ENCODE measurements at regions of chr1 and their contacts with region 1.

Region 1: GRCh38 chr1:117541003-117541402 is 64.8 kb upstream of the TENT5C start:
- DNase-seq: no peak
- ATAC-seq: no peak
- H3K4me3 ChIP-seq: no peak overlapping the region
- H3K4me3 Mint-ChIP-seq: no peak overlapping the region
- H3K27ac ChIP-seq: no peak overlapping the region
- H3K27ac Mint-ChIP-seq: no peak overlapping the region
- H3K4me1 ChIP-seq: peaks cover 9% of the 10 kb centered on the region
- H3K4me1 Mint-ChIP-seq: no peaks in the 10 kb centered on the region
- H3K27me3 ChIP-seq: no peaks in the 10 kb centered on the region
- H3K27me3 Mint-ChIP-seq: no peaks in the 10 kb centered on the region
- CTCF ChIP-seq: no peak

Region 2: GRCh38 chr1:117590271-117590925 is 49.4 kb after region 1 on chr1:
- CTCF ChIA-PET with region 1: no interaction called
- POLR2A ChIA-PET with region 1: no interaction called
- intact Hi-C with region 1: loop called in 1 of 2 experiments (anchors 5 kb)
- DNase-seq: no peak
- ATAC-seq: no peak
- H3K4me3 ChIP-seq: no peak overlapping the region
- H3K4me3 Mint-ChIP-seq: no peak overlapping the region
- H3K27ac ChIP-seq: no peak overlapping the region
- H3K27ac Mint-ChIP-seq: no peak overlapping the region
- H3K4me1 ChIP-seq: no peaks in the 10 kb centered on the region
- H3K4me1 Mint-ChIP-seq: no peaks in the 10 kb centered on the region
- H3K27me3 ChIP-seq: no peaks in the 10 kb centered on the region
- H3K27me3 Mint-ChIP-seq: no peaks in the 10 kb centered on the region
- CTCF ChIP-seq: no peak

Region 3: GRCh38 chr1:117942293-117942692 is 401.3 kb after region 1 on chr1:
- CTCF ChIA-PET with region 1: no interaction called
- POLR2A ChIA-PET with region 1: no interaction called
- intact Hi-C with region 1: no loop called
- DNase-seq: no peak
- ATAC-seq: no peak
- H3K4me3 ChIP-seq: no peak overlapping the region
- H3K4me3 Mint-ChIP-seq: no peak overlapping the region
- H3K27ac ChIP-seq: no peak overlapping the region
- H3K27ac Mint-ChIP-seq: no peak overlapping the region
- H3K4me1 ChIP-seq: no peaks in the 10 kb centered on the region
- H3K4me1 Mint-ChIP-seq: no peaks in the 10 kb centered on the region
- H3K27me3 ChIP-seq: no peaks in the 10 kb centered on the region
- H3K27me3 Mint-ChIP-seq: no peaks in the 10 kb centered on the region
- CTCF ChIP-seq: no peak

Measured in CD4-positive, alpha-beta T cell (primary cell).